ENCODE measurements at regions of chr17 and their contacts with region 1.

Region 1: DNA sequence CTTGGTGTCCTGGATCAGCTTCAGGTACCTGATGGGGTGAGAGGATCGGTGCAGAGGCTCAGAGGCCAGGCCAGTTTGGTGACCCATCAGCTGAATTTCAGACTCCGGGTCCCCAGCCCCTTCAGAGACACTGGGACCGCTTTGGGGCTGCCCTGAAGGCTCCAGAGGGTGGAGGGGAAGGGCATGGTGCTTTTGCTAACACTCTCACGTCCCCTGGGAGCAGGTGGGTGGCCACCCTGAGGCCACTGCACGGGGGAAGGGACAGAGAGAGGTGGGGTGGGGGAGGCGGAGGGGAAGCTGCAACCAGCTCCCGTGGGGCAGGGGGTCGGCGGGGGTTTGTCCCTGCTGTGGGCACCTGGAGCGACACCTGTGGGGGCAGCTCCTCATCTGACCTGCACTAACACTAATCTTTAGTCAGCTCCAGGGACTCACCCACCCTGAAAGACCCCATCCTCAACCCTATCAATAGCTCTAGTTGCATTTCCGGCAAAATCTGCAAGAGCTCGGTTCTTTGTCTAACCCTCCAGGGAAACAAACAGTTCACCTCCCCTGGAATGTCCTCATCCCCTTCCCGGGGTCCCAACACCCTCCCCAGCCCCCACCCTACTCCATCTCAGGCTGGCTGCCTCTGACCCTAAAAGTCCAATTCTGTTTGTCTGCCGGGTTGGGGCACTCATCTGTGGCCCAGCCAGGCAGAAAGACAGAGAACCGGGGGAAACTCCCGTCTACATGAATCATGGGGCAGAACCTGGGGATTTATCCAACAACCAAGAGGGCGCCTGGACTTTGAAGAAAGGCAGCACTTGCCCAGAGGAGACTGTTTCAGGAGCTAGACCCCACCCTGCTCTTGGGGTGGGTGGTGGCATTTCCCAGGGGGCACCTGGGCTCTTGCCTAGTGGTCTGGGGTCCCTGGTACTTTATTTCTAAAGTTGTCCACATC is 91.9 kb upstream of the CBX4 start:
- DNase-seq: no peak
- ATAC-seq: peak; percentile 0; the same call in 2 of the 3 replicates
- H3K4me3 ChIP-seq: peak overlapping the region; percentile 4 to 48 (median 45); a peak in 5 of 6 replicates
- H3K27ac ChIP-seq: peak overlapping the region; percentile 24
- H3K4me1 ChIP-seq: peaks cover 93% of the 10 kb centered on the region
- H3K27me3 ChIP-seq: no peaks in the 10 kb centered on the region
- CTCF ChIP-seq: no peak
- EP300 ChIP-seq: no peak
- POLR2A ChIP-seq: no peak
- RAD21 ChIP-seq: no peak

Region 2: DNA sequence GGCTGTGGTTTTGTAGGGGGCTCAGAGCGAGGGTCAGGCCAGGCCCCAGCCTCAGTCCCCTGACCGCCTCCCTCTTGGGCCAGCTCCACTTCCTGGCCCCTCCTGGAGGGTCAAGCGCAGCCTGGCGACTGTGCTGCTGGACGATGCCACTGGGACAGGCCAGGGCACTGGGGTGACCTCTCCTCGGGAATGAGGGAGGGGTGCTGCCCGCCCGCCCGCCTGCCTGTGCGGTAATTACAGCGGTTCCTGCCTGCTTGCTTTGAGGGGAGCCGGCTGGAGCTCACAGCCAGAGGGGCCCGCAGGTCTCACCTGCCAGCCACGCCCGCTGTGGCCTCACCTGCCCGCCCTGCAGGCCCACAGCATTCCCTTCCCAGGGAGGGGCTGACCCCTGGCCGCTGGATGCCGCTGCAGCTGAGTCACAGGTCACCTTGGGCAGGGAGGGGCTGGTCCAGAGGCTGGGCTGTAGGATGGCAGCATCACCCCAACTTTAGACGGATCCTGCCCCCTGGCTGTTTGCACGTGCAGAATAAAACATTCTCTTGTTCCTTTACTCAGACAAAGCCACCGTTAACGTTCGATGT is 15.2 kb before region 1 on chr17:
- CTCF ChIA-PET with region 1: no interaction called
- POLR2A ChIA-PET with region 1: interaction called, 16 read pairs
- in situ Hi-C with region 1: no loop called
- intact Hi-C with region 1: no loop called
- DNase-seq: peak; percentile 75
- ATAC-seq: peak; percentile 31
- H3K4me3 ChIP-seq: peak overlapping the region in 1 of 3 experiments; percentile 9; a peak in 1 of 6 replicates
- H3K27ac ChIP-seq: no peak overlapping the region
- H3K4me1 ChIP-seq: peaks cover 82% of the 10 kb centered on the region
- H3K27me3 ChIP-seq: peaks cover 3 to 85% of the 10 kb centered on the region in 2 experiments; a peak in 4 of 5 replicates
- CTCF ChIP-seq: peak; percentile 77
- EP300 ChIP-seq: no peak
- POLR2A ChIP-seq: no peak
- RAD21 ChIP-seq: peak; percentile 74

Region 3: GRCh38 chr17:80036715-80037477 is 105.7 kb after region 1 on chr17:
- CTCF ChIA-PET with region 1: no interaction called
- POLR2A ChIA-PET with region 1: no interaction called
- in situ Hi-C with region 1: no loop called
- intact Hi-C with region 1: no loop called
- DNase-seq: peak; percentile 57
- ATAC-seq: peak; percentile 78
- H3K4me3 ChIP-seq: peak overlapping the region; percentile 78 to 91 (median 79)
- H3K27ac ChIP-seq: peak overlapping the region; percentile 96
- H3K4me1 ChIP-seq: peaks cover 36% of the 10 kb centered on the region
- H3K27me3 ChIP-seq: no peaks in the 10 kb centered on the region; a peak in 1 of 5 replicates
- CTCF ChIP-seq: peak; percentile 25; the same call in 1 of the 2 replicates
- EP300 ChIP-seq: no peak
- POLR2A ChIP-seq: peak in 1 of 2 experiments; percentile 49; a peak in 1 of 4 replicates
- RAD21 ChIP-seq: 0 out of 2 replicates have a peak, but pooled peaks have one; percentile 26

Measured in HepG2 (cell line).